HCT116 (cell line): ENCODE measurements at regions of chr12 and their contacts with region 1.

Region 1: GRCh38 chr12:91382081-91382543 is 199.5 kb upstream of the DCN start:
- DNase-seq: peak; percentile 66
- ATAC-seq: peak; percentile 80
- H3K4me3 ChIP-seq: no peak overlapping the region
- H3K27ac ChIP-seq: no peak overlapping the region
- H3K4me1 ChIP-seq: peaks cover 0 to 5% of the 10 kb centered on the region in 2 experiments; a peak in 2 of 4 replicates
- H3K27me3 ChIP-seq: no peaks in the 10 kb centered on the region
- CTCF ChIP-seq: peak; percentile 62 to 88 (median 82); a peak in 5 of 6 replicates
- POLR2A ChIP-seq: no peak
- RAD21 ChIP-seq: peak; percentile 91

Region 2: DNA sequence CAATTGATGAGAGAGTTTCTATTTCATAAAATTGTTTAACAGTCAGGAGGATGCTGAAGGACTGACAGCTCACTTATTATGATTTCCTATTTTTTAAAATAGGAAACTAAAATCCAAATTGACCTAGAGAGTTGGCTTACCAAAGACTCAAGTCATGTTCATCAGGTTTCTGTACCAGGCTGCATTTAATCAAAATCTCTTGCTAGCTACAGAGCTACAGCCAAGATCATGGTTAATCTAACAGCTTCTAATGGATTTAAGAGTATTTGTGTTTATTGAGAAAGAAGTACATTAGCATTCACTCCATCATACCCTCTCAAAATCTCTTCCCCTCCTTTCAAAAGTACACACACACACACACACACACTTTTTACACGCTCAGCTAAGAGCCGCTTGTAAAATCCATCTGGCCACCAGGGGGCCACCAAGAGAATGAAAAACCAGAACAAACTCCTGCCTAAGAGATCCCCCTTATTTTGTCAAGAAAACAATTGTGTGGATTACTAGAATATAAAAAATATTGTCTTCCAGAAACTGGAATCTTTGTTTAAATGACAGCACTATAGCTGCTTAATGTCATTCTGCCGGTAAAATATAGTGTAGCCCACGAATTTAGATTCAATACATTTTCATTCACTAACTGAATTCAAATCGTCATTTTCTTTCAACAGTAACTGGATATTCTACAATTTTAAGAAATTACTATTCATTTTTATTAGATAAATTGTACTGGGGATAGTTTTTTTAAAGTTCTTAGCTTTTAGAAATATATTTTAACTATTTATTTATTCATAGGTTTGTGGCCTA is 429.6 kb after region 1 on chr12:
- CTCF ChIA-PET with region 1: interaction called, 4 read pairs
- POLR2A ChIA-PET with region 1: no interaction called
- RAD21 ChIA-PET with region 1: no interaction called
- intact Hi-C with region 1: loop called (anchors 10 kb)
- DNase-seq: peak; percentile 53
- ATAC-seq: peak; percentile 84
- H3K4me3 ChIP-seq: no peak overlapping the region
- H3K27ac ChIP-seq: no peak overlapping the region
- H3K4me1 ChIP-seq: no peaks in the 10 kb centered on the region
- H3K27me3 ChIP-seq: no peaks in the 10 kb centered on the region
- CTCF ChIP-seq: peak; percentile 45 to 87 (median 81); a peak in 5 of 6 replicates
- POLR2A ChIP-seq: no peak
- RAD21 ChIP-seq: peak; percentile 67

Region 3: DNA sequence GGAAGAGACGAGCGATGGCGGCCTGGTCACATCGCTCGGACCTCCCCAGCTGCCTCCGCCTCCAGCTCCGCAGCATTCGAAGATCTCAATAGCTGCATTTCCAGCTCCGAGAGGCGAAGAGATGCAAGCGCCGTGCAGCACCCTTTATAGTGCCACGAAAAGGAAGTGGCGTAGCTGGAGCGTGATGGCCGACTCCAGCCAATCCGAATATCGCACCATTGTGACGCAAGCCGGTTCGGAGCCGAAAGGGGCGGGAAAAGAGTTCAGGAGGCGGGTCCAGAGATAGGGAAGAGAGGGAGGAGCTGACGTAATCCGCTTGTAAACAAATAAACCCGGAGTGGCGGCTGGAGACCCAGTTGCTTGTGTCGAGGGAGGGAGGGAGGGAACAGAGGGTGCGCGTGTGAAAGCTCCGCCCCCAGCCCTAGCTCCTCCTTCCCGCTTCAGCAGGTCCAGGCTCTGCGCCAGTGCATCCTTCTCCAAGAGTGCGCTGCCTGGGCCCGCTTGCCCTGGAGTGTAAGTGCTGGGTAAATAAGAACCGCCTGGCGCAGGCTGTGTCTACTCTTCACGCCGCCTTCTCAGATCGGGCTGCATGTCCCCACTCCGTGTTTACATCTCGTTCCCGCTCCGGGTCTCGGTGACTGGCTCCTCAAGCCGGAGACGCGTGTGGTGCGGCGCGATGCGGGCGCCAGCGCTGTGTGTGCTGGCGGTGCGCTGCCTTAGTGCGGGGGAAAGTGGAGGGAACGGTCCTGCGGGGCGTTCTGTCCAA is 763.8 kb after region 1 on chr12 and contains the start of gene BTG1:
- CTCF ChIA-PET with region 1: interaction called, 12 read pairs
- POLR2A ChIA-PET with region 1: interaction called, 8 read pairs
- RAD21 ChIA-PET with region 1: no interaction called
- intact Hi-C with region 1: loop called (anchors 2 kb)
- DNase-seq: peak; percentile 99
- ATAC-seq: peak; percentile 84
- H3K4me3 ChIP-seq: peak within 1 kb of the TSS; percentile 54 to 78
- H3K27ac ChIP-seq: peak within 1 kb of the TSS; percentile 80
- H3K4me1 ChIP-seq: peaks cover 5 to 18% of the 10 kb centered on the region in 2 experiments; a peak in 3 of 4 replicates
- H3K27me3 ChIP-seq: no peaks in the 10 kb centered on the region
- CTCF ChIP-seq: no peak
- POLR2A ChIP-seq: peak; percentile 99
- RAD21 ChIP-seq: peak; percentile 25; the same call in 1 of the 2 replicates
- total RNA-seq, gene BTG1: 57.3 TPM

Region 4: DNA sequence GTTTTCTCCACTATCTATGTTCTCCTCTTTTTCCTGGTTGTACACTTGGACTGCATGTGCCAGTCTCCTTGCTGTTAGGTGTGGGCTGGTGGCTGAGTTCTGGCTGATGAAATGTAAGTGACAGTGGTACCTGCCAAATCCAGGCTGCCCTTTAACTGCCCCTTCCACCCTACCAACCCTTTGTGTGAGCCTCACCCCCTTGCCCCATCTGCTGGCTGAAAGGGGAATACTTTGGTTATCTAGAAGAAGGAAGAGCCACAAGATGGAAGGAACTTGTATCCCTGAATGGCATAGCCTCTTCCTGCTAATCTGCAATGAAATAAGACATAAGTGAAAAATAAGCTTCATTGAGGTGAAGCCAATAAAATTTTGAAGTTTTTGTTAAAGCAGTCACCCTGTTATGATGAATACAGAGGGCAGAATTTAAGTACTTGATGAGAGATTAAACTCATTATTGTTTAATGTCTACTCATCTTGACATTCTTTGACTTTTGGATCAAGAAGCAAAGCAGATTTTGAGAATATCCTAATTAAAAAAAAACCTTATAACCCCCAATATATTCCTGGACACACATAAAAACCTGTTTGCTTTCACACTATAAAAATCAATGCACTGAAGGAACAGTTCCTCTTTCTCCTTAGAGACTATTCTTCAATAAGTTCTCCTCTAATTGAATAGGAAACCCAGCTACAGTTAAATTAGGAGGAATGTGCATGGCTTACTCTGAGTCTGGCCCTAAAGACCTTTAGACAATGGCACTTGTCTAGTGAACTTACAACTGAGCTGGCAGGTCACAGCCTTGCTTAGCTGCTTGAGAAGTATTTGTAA is 1026.2 kb after region 1 on chr12:
- CTCF ChIA-PET with region 1: no interaction called
- POLR2A ChIA-PET with region 1: no interaction called
- RAD21 ChIA-PET with region 1: no interaction called
- intact Hi-C with region 1: loop called (anchors 1 kb)
- DNase-seq: peak; percentile 40
- ATAC-seq: peak; percentile 89
- H3K4me3 ChIP-seq: no peak overlapping the region
- H3K27ac ChIP-seq: no peak overlapping the region
- H3K4me1 ChIP-seq: no peaks in the 10 kb centered on the region
- H3K27me3 ChIP-seq: no peaks in the 10 kb centered on the region
- CTCF ChIP-seq: peak; percentile 41 to 66 (median 65); a peak in 5 of 6 replicates
- POLR2A ChIP-seq: no peak
- RAD21 ChIP-seq: peak; percentile 70

Region 5: DNA sequence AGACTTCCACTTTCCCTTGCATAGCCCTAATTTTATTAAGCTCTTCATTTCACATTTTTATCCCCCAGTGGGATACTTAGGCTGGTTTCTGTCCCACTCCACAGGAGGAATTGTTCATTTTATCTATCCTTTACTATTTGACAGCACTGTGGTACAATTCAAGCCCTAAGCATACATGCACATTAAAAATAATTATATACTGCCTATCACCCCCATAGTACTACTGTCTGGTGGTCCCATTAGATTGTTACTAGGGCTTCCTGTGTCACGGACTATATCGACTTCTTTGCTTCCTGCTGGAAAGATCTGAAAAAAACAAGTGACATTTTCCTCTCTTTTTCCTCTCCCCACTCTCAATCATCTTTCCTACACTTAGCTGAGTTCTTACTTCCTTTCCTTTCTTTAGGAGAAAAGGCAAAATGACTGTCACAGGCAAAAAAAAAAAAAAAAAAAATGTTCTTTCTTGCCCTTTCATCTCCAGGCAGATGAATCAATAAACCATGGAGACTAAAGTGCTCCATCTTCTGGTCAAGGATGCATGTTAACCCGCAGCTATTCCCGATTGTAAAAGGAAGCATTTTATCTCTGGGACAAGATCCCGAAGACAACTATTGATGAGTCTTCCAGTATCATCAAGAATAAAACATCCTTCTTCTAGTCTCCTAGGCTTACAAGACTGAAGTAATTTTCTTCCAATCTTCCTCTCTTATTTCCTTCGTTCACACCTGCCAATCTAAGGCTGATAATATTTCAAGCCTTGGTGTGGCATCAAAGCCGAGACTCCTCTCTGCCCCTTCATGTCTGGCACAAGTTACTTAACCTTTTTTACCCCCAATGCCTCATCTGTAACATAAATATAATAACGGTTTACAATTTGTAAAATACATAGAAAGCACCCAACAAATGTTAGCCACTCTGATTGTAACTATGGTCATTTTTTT is 1226.3 kb after region 1 on chr12:
- CTCF ChIA-PET with region 1: interaction called, 7 read pairs
- POLR2A ChIA-PET with region 1: no interaction called
- RAD21 ChIA-PET with region 1: no interaction called
- intact Hi-C with region 1: loop called (anchors 1 kb)
- DNase-seq: peak; percentile 33
- ATAC-seq: peak; percentile 86
- H3K4me3 ChIP-seq: no peak overlapping the region
- H3K27ac ChIP-seq: no peak overlapping the region
- H3K4me1 ChIP-seq: 0 out of 4 replicates have a peak, but pooled peaks cover 0 to 2% of the 10 kb centered on the region in 2 experiments
- H3K27me3 ChIP-seq: no peaks in the 10 kb centered on the region
- CTCF ChIP-seq: peak; percentile 51 to 72 (median 68); a peak in 5 of 6 replicates
- POLR2A ChIP-seq: no peak
- RAD21 ChIP-seq: peak; percentile 63

Region 6: GRCh38 chr12:92649511-92650227 is 1267.6 kb after region 1 on chr12:
- CTCF ChIA-PET with region 1: interaction called, 10 read pairs
- POLR2A ChIA-PET with region 1: no interaction called
- RAD21 ChIA-PET with region 1: no interaction called
- intact Hi-C with region 1: loop called (anchors 1 kb)
- DNase-seq: peak; percentile 76
- ATAC-seq: peak; percentile 97
- H3K4me3 ChIP-seq: no peak overlapping the region
- H3K27ac ChIP-seq: no peak overlapping the region
- H3K4me1 ChIP-seq: no peaks in the 10 kb centered on the region
- H3K27me3 ChIP-seq: no peaks in the 10 kb centered on the region
- CTCF ChIP-seq: peak; percentile 67 to 83 (median 77)
- POLR2A ChIP-seq: no peak
- RAD21 ChIP-seq: peak; percentile 91